ENCODE measurements at regions of chr11 and their contacts with region 1.

Region 1: DNA sequence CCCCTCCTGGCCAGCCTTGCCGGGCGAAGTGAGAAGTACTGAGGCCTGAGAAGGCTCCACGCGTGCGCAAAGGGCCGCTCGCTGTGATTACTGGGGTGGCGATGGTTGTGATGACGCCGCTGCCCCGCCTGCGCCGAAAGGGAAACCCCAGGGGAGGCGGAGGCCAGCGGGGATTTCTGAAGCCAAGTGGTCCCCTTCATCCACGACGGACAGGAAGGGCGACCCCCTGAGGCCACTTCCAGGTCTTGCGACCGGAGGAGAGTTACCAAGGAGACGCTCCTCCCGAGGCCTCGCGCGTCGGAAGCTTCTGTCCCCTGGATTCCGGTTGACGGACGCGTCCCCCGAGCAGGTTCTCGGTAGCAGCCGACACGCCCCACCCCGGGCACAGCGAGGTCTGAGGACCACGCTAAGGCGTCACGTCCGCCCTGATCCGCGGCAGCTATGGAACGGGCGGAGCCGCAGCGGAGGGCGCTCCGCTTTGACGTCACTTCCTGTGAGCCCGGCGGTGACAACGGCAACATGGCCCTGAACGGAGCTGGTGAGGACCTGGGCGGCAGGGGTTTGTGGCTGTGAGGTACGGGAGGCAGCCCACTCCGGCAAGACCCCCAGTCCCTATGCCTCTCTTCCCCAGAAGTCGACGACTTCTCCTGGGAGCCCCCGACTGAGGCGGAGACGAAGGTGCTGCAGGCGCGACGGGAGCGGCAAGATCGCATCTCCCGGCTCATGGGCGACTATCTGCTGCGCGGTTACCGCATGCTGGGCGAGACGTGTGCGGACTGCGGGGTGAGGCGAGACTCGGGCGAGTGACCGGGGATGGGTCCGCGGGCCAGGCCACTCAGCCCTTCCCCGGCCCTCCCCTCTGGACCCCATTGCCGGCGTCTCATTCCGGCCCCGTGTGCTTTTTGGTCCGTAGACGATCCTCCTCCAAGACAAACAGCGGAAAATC is at the start of gene ZNRD2:
- DNase-seq: peak; percentile 100
- H3K4me3 Mint-ChIP-seq: peak within 1 kb of the TSS; percentile 100
- H3K27ac Mint-ChIP-seq: peak within 1 kb of the TSS; percentile 95
- H3K4me1 Mint-ChIP-seq: peaks cover 62% of the 10 kb centered on the region
- H3K27me3 Mint-ChIP-seq: no peaks in the 10 kb centered on the region
- total RNA-seq, gene ZNRD2: 48.1 to 51.1 TPM

Region 2: GRCh38 chr11:65382033-65382807 is 188.0 kb before region 1 on chr11 and contains the start of gene SLC25A45:
- CTCF ChIA-PET with region 1: interaction called, 3 read pairs
- POLR2A ChIA-PET with region 1: interaction called, 3 read pairs
- intact Hi-C with region 1: loop called (anchors 5 kb)
- DNase-seq: peak; percentile 97
- H3K4me3 Mint-ChIP-seq: peak within 1 kb of the TSS; percentile 85
- H3K27ac Mint-ChIP-seq: peak within 1 kb of the TSS; percentile 97
- H3K4me1 Mint-ChIP-seq: peaks cover 41% of the 10 kb centered on the region
- H3K27me3 Mint-ChIP-seq: no peaks in the 10 kb centered on the region
- total RNA-seq, gene SLC25A45: 14.4 to 16.1 TPM

Region 3: DNA sequence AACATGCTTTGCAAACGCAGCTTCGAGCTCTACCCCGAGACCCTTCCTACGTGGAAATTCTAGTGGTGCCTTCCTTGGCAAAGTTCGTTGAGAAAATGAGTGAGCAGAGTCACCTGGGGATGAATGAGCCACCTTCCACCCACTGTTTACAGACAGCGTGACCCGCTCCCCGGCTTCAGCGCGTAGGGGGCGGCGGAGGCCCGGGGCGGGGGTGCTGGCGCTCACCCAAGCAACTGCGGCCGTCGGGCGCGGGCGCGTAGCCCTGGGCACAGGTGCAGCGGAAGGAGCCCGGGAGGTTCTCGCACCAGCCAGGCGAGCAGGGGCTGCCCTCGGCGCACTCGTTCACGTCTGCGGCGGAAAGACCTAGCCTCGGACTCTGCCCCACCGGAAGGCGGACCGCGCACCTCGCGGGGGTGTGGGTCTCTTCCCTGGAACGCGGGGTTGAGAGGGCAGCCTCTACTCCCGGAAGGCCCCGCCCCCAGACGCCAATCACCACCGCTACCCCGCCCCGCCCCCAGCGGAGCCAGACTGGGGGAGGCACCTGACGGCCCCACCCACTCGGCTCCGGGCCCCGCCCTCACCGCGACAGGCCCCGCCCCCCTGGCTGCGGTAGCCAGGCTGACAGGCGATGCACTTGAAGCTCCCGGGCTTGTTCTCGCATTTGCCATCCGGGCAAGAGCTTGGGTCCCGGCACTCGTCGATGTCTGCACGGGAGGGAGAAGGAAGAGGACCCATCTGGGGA is 23.9 kb before region 1 on chr11:
- CTCF ChIA-PET with region 1: interaction called, 176 read pairs
- POLR2A ChIA-PET with region 1: interaction called, 17 read pairs
- intact Hi-C with region 1: loop called (anchors 1 kb)
- DNase-seq: peak; percentile 99
- H3K4me3 Mint-ChIP-seq: peak overlapping the region; percentile 77
- H3K27ac Mint-ChIP-seq: peak overlapping the region; percentile 88
- H3K4me1 Mint-ChIP-seq: peaks cover 47% of the 10 kb centered on the region
- H3K27me3 Mint-ChIP-seq: no peaks in the 10 kb centered on the region

Region 4: GRCh38 chr11:65558002-65558931 is 12.0 kb before region 1 on chr11 and contains the start of gene LTBP3:
- CTCF ChIA-PET with region 1: interaction called, 19 read pairs
- POLR2A ChIA-PET with region 1: interaction called, 28 read pairs
- intact Hi-C with region 1: loop called (anchors 1 kb)
- DNase-seq: peak; percentile 62
- H3K4me3 Mint-ChIP-seq: peak within 1 kb of the TSS; percentile 84
- H3K27ac Mint-ChIP-seq: peak within 1 kb of the TSS; percentile 84
- H3K4me1 Mint-ChIP-seq: peaks cover 57% of the 10 kb centered on the region
- H3K27me3 Mint-ChIP-seq: no peaks in the 10 kb centered on the region
- total RNA-seq, gene LTBP3: 60.7 to 63.3 TPM

Region 5: GRCh38 chr11:65593518-65594298 is 23.5 kb after region 1 on chr11:
- CTCF ChIA-PET with region 1: interaction called, 126 read pairs
- POLR2A ChIA-PET with region 1: interaction called, 68 read pairs
- intact Hi-C with region 1: loop called (anchors 1 kb)
- DNase-seq: peak; percentile 50
- H3K4me3 Mint-ChIP-seq: no peak overlapping the region
- H3K27ac Mint-ChIP-seq: peak overlapping the region; percentile 42
- H3K4me1 Mint-ChIP-seq: peaks cover 13% of the 10 kb centered on the region
- H3K27me3 Mint-ChIP-seq: no peaks in the 10 kb centered on the region

Region 6: DNA sequence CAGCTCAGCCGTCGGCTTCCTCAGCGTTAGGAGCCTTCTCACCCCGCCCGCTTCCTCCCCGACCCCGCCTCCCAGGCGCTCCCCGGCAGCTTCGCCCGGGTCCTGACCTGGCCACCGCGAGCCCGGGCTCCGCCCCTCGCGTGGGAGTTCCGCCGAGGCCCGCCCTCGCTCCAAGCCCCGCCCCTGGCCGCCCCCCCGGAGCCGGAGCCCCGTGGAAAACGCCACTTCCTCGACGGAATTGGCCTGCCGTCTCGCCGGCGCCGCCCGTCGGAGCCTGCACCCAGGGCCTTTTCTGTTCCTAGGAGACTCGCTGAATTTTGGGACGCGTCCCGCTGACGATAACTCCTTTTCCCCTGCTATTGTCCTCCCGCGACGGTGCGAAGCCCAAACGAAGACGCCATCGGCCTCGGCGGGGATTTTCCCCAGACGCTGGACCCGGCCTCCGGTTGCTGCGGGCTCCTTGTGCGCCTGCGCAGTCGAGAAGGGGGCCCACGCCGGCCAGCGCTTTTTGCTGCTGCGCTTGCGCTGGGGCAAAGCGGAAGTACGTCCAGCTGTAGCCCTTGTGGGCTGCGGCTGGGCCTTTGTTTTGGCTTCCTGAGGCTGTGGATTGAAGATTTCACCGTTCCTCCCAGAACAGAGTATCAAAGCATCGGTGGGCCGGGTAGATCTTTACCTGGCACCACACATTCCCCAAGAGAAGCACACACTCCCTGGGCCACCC is 82.4 kb after region 1 on chr11:
- CTCF ChIA-PET with region 1: no interaction called
- POLR2A ChIA-PET with region 1: no interaction called
- intact Hi-C with region 1: loop called (anchors 5 kb)
- DNase-seq: peak; percentile 97
- H3K4me3 Mint-ChIP-seq: peak overlapping the region; percentile 77
- H3K27ac Mint-ChIP-seq: peak overlapping the region; percentile 93
- H3K4me1 Mint-ChIP-seq: peaks cover 51% of the 10 kb centered on the region
- H3K27me3 Mint-ChIP-seq: no peaks in the 10 kb centered on the region